Activated CD4-positive, alpha-beta T cell treated with anti-CD3 and anti-CD28 coated beads for 36 hours (primary cell): ENCODE measurements at regions of chr16 and their contacts with region 1.

Region 1: DNA sequence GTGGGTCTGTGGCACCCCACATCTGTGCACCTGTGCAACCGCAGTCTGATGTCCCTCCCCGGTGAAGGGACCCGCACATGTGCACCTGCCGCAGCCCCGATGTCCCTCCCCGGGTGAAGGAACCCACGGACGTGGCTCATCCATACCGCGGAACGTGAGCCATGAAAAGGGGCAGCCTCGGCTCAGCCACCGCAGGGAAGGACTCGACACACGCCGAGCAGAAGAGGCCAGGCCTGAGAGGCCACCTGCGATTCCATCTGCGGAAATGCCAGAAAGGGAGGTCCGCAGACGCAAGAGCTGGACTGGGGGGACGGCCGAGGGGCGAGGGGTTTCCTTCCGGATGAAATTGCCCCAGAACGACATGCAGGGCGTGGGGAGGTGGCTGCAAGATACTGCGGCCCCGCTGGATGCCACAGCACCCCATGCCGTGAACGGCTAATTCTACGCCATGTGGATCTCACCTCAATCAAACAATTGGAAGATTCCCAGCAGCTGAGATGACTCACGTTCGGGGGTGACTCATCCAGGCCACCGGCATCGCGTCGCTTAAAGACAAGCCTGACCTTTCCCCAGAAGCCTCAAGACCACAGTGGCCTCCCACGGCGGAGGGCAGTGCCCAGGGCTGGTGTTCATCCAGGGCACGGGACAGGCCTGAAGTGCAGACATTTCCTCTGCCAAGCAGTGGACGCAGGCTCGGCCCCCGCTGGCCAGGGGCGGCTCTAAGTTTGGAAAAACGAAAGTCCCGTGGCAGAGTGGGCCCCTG is 21.0 kb downstream of the SOX8 start:
- DNase-seq: peak; percentile 92
- ATAC-seq: peak; percentile 69
- H3K4me3 Mint-ChIP-seq: peak overlapping the region; percentile 26
- H3K27ac Mint-ChIP-seq: no peak overlapping the region
- H3K4me1 Mint-ChIP-seq: peaks cover 53% of the 10 kb centered on the region
- H3K27me3 Mint-ChIP-seq: no peaks in the 10 kb centered on the region

Region 2: DNA sequence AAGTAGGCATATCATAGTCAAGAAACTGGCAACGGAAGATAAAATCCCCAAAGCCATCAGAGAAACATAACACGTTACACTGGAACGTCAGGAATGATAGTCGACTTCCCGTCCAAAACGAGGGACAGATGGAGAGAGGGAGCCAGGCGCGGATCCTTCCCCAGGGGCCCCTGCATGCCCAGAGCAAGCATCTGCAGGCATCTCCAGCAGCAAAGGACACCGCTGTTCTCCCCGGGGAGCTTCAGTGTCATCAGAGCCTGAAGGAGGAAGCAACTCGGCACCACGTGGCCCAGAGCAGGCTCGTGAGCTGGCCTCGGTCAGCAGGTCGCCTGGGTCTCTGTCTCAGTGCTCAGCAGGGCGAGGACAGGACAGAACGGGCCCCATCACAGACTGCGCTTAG is 81.9 kb before region 1 on chr16:
- CTCF ChIA-PET with region 1: no interaction called
- POLR2A ChIA-PET with region 1: no interaction called
- intact Hi-C with region 1: no loop called
- DNase-seq: no peak
- ATAC-seq: no peak
- H3K4me3 Mint-ChIP-seq: no peak overlapping the region
- H3K27ac Mint-ChIP-seq: no peak overlapping the region
- H3K4me1 Mint-ChIP-seq: no peaks in the 10 kb centered on the region
- H3K27me3 Mint-ChIP-seq: no peaks in the 10 kb centered on the region

Region 3: GRCh38 chr16:964356-965042 is 38.1 kb before region 1 on chr16:
- CTCF ChIA-PET with region 1: interaction called, 5 read pairs
- POLR2A ChIA-PET with region 1: interaction called, 4 read pairs
- intact Hi-C with region 1: loop called in 1 of 2 experiments (anchors 5 kb)
- DNase-seq: peak; percentile 84
- ATAC-seq: peak; percentile 92
- H3K4me3 Mint-ChIP-seq: peak overlapping the region; percentile 62
- H3K27ac Mint-ChIP-seq: peak overlapping the region; percentile 99
- H3K4me1 Mint-ChIP-seq: peaks cover 46% of the 10 kb centered on the region
- H3K27me3 Mint-ChIP-seq: no peaks in the 10 kb centered on the region

Region 4: GRCh38 chr16:981695-982144 is 20.9 kb before region 1 on chr16 and contains the start of gene SOX8:
- CTCF ChIA-PET with region 1: interaction called, 3 read pairs
- POLR2A ChIA-PET with region 1: interaction called, 3 read pairs
- intact Hi-C with region 1: loop called in 1 of 2 experiments (anchors 1 kb)
- DNase-seq: no peak
- ATAC-seq: no peak
- H3K4me3 Mint-ChIP-seq: peak within 1 kb of the TSS; percentile 74
- H3K27ac Mint-ChIP-seq: no peak within 1 kb of the TSS
- H3K4me1 Mint-ChIP-seq: peaks cover 12% of the 10 kb centered on the region
- H3K27me3 Mint-ChIP-seq: peaks cover 4% of the 10 kb centered on the region
- total RNA-seq, gene SOX8: 1.4 to 1.6 TPM